Lower leg skin (tissue), 4 donors: ENCODE measurements at regions of chr2 and their contacts with region 1.

Region 1: GRCh38 chr2:6960659-6961058 is 43.4 kb downstream of the RNF144A start:
- DNase-seq: peak in 1 of 2 donors; percentile 33
- H3K4me3 ChIP-seq: no peak overlapping the region
- CTCF ChIP-seq: no peak
- POLR2A ChIP-seq: no peak

Region 2: GRCh38 chr2:6986301-6987176 is 25.9 kb after region 1 on chr2:
- intact Hi-C with region 1: no loop called
- DNase-seq: no peak
- H3K4me3 ChIP-seq: no peak overlapping the region
- CTCF ChIP-seq: no peak
- POLR2A ChIP-seq: no peak

Region 3: DNA sequence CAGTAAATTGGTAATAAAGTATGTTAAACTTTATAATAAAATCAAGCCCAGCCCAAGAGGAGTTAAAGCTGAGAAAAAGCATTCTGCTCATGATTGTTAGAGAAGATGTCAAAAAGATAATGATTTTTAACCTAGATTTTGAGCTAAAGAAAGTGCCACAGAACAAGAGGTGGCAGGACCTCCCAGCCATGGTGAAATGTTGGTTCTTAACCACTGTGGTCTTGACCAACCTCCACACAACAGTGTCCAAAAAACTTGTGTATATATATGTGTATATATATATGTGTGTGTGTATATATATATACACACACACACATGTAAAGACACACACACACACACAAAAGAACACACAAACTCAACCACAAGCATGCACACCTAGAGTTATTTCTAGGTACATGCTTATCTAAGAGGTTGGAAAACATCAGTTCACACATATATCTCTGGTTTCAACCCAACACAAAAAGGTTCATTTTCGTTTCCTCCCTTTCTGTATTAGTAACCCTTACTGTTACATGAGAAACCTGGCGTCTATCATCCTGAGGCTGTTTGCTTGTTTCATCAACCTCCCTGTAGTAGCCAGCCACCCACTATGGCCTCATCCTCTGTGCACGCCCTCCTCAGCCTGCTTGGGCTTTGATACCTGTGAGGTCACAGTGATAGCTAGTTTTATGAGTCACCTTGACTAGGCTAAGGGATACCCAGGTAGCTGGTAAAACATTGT is 1089.4 kb after region 1 on chr2:
- intact Hi-C with region 1: loop called (anchors 5 kb)
- DNase-seq: no peak
- H3K4me3 ChIP-seq: no peak overlapping the region
- CTCF ChIP-seq: no peak
- POLR2A ChIP-seq: no peak